ENCODE measurements at regions of chr2 and their contacts with region 1.

Region 1: GRCh38 chr2:20642055-20642971 is 8.6 kb downstream of the HS1BP3 start:
- DNase-seq: peak; percentile 46 to 83
- H3K4me3 ChIP-seq: no peak overlapping the region
- H3K4me1 ChIP-seq: no peaks in the 10 kb centered on the region
- H3K27me3 ChIP-seq: no peaks in the 10 kb centered on the region

Region 2: DNA sequence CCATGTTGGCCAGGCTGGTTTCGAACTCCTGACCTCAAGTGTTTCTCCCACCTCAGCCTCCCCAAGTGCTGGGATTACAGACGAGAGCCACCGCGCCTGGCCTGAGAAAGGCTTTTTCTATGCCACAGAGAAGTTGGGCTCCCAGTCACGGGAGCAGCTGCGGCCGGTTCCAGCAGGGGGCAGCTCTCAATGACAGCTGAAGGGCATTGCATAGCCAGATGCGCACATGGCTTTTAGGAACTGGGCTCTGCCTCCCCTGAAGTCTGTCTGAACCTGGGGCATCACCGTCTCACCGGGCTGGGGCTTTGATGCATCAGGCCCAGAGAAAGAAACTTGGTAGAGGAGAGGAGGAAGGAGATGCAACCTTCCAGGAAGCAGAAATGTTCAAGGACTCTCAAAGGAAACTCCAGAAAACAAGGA is 506.7 kb before region 1 on chr2:
- in situ Hi-C with region 1: loop called (anchors 25 kb)
- DNase-seq: peak; percentile 70 to 88
- H3K4me3 ChIP-seq: no peak overlapping the region
- H3K4me1 ChIP-seq: no peaks in the 10 kb centered on the region
- H3K27me3 ChIP-seq: no peaks in the 10 kb centered on the region; the same call in 1 of the 2 replicates

Region 3: GRCh38 chr2:20443276-20443920 is 198.9 kb before region 1 on chr2:
- in situ Hi-C with region 1: loop called (anchors 5 kb)
- DNase-seq: peak; percentile 53 to 59
- H3K4me3 ChIP-seq: no peak overlapping the region
- H3K4me1 ChIP-seq: peaks cover 4% of the 10 kb centered on the region
- H3K27me3 ChIP-seq: peaks cover 4% of the 10 kb centered on the region; the same call in 1 of the 2 replicates